Activated T-helper 2 cell treated with anti-CD3 and anti-CD28 coated beads, Interferon-gamma antibody, Interleukin-2, Interleukin-4, amounts not matched to agents 10 μg/mL and 5 μg/mL and 100 μg/mL, durations not matched to agents 14 hours and 24 hours and 36 hours (primary cell): ENCODE measurements at regions of chr9 and their contacts with region 1.

Region 1: DNA sequence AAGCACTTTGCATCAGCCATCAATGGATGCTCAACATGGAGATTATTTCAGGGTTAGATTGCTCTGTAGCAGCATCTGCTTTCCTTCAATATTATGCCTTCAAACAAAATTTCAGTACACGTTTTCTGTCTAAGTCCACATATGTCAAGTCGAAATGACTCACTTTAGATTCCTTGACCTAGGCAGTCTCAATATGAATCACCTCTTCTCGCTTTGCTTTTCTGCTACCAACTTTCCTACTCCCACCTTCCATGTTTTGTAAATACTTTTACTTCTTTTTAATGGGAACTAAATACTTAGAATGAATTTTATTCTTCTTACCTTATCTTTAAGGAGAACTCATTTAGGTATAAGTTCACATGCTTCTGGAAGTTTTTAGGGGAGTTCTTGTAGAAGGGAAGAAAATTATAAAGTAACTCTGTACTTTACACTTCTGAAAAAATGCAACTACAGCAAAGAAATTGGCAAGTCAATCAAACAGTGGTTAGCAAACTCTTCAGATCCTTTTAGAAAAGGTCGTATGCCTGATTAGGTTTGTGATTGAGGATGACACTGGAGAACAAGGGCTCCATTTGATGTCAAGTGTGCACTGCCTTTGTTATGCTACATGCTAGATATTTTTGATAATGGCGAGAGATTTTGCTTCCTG is 478.5 kb upstream of the SMARCA2 start:
- DNase-seq: no peak
- H3K4me3 Mint-ChIP-seq: no peak overlapping the region
- H3K27ac Mint-ChIP-seq: peak overlapping the region; percentile 71
- H3K4me1 Mint-ChIP-seq: peaks cover 23% of the 10 kb centered on the region
- H3K27me3 Mint-ChIP-seq: no peaks in the 10 kb centered on the region

Region 2: GRCh38 chr9:1400983-1401382 is 135.7 kb before region 1 on chr9:
- intact Hi-C with region 1: no loop called
- DNase-seq: no peak
- H3K4me3 Mint-ChIP-seq: no peak overlapping the region
- H3K27ac Mint-ChIP-seq: no peak overlapping the region
- H3K4me1 Mint-ChIP-seq: no peaks in the 10 kb centered on the region
- H3K27me3 Mint-ChIP-seq: no peaks in the 10 kb centered on the region

Region 3: DNA sequence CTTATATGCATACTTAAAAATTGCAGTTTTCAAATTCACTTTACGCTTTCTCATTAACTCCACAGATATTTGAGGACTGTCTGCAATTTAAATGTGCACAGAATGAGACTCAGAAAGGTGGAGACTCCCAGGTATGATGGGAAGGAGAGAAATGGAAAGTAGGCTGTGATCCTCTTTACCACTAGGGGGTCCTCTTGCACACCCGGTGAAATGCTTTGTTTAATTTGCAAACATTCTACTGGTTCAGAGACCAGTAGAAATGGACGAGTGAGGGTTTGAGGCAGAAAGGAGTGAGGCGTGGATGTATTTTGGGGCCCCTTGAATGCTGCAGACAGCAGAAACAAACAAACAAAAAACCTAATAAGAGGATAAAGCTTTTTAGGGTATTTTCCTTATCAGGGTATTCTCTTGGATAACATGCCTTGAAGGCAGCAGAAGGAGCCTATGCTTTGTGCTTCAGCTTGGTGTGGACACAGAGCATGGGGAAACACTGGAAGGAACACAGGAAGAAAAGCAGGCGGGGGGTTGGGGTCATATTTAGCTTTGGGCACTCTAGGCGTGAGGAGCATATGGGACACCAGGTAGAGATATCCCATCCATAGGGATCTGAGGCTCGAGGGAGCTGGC is 76.4 kb before region 1 on chr9:
- intact Hi-C with region 1: loop called (anchors 2 kb)
- DNase-seq: peak; percentile 8
- H3K4me3 Mint-ChIP-seq: no peak overlapping the region
- H3K27ac Mint-ChIP-seq: peak overlapping the region; percentile 6
- H3K4me1 Mint-ChIP-seq: peaks cover 10% of the 10 kb centered on the region
- H3K27me3 Mint-ChIP-seq: no peaks in the 10 kb centered on the region

Region 4: DNA sequence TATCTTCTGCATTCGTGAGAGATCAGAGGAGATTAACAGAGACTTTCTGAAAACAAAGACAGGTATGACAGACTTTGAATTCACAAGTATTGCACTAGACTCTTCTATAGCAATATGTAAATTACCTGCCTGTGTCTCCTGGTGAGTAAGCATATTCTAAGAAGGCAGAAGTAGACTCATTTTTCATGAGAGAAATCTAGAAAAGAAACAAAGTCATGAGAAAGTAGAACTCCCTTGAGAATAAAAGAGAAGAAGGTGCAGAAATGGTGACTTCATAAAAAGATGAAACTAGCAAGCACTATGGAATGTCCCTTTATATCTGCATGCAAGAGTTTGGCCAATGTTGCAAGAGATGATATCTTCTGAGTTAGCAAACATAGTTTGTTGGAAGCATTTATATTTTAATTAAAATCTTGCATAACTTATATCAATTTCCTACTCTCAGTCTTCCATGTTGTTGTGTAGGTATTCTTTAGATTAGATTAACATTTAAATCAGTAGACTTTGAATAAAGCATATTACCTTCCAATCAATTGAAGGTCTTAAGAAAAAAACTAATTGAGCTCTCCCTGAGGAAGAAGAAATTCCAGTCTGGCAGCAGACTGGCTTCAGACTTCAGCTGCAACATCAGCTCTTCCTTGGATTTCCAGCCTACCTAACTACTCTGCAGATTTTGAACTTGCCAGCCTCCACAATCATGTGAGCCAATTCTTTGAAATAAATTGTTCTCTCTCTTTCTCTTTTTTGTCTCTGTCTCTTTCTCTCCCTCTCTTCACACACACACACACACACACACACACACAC is 66.4 kb before region 1 on chr9:
- intact Hi-C with region 1: loop called (anchors 1 kb)
- DNase-seq: no peak
- H3K4me3 Mint-ChIP-seq: no peak overlapping the region
- H3K27ac Mint-ChIP-seq: peak overlapping the region; percentile 41
- H3K4me1 Mint-ChIP-seq: peaks cover 8% of the 10 kb centered on the region
- H3K27me3 Mint-ChIP-seq: no peaks in the 10 kb centered on the region

Region 5: GRCh38 chr9:1490341-1491232 is 46.1 kb before region 1 on chr9:
- intact Hi-C with region 1: loop called (anchors 1 kb)
- DNase-seq: no peak
- H3K4me3 Mint-ChIP-seq: peak overlapping the region; percentile 11
- H3K27ac Mint-ChIP-seq: peak overlapping the region; percentile 93
- H3K4me1 Mint-ChIP-seq: peaks cover 16% of the 10 kb centered on the region
- H3K27me3 Mint-ChIP-seq: no peaks in the 10 kb centered on the region

Region 6: GRCh38 chr9:1505489-1505888 is 31.2 kb before region 1 on chr9:
- intact Hi-C with region 1: loop called (anchors 1 kb)
- DNase-seq: no peak
- H3K4me3 Mint-ChIP-seq: no peak overlapping the region
- H3K27ac Mint-ChIP-seq: peak overlapping the region; percentile 87
- H3K4me1 Mint-ChIP-seq: peaks cover 20% of the 10 kb centered on the region
- H3K27me3 Mint-ChIP-seq: no peaks in the 10 kb centered on the region

Region 7: GRCh38 chr9:1604942-1605560 is 68.4 kb after region 1 on chr9:
- intact Hi-C with region 1: loop called (anchors 10 kb)
- DNase-seq: no peak
- H3K4me3 Mint-ChIP-seq: no peak overlapping the region
- H3K27ac Mint-ChIP-seq: no peak overlapping the region
- H3K4me1 Mint-ChIP-seq: no peaks in the 10 kb centered on the region
- H3K27me3 Mint-ChIP-seq: no peaks in the 10 kb centered on the region